Activated T-helper 1 cell treated with anti-CD3 and anti-CD28 coated beads, Interleukin-12 subunit alpha, Interleukin-12 subunit beta, Interleukin-2, Interleukin-4 antibody, amounts not matched to agents 30 ng/mL and 10 ng/mL and 1 ng/mL, durations not matched to agents 14 hours and 24 hours and 36 hours (primary cell): ENCODE measurements at regions of chr10 and their contacts with region 1.

Region 1: DNA sequence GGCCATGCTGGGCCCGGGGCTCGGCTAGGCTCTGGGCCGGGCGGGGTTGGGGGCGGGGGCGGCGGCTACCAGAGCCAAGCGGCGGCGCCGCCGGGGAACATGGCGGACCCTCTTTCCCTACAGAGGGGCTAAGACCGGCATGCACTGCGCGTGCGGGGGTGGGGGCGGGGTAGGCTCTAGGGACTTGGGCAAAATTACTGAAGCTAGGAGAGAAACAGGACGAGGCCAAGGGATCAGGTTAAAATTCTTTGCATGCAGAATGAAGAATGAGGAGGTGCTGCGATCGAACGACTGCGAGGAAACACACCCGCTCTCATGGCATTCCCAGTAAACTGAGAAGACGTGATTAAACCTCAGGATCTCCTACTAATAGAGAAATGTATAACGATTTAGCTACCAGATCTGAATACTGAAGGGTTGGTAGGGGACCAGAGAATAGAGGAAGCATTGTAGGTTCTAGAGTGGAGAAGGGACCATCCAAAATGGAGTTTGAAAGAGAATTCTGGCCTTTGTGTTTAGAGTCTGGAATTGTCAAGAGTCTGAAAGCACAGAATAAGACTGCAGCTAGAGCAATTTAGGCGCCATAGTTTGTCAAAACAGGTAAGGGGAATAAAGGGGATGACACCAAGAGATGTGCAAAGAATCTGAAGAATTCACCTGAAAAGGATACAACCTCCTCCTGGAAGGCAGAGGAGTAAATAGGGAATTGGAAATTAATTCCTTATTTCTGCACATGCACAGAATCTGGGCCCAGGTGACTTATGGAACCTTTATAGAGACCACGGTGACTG is at the start of gene PPP3CB:
- DNase-seq: peak; percentile 77
- H3K4me3 Mint-ChIP-seq: peak within 1 kb of the TSS; percentile 100
- H3K27ac Mint-ChIP-seq: peak within 1 kb of the TSS; percentile 98
- H3K4me1 Mint-ChIP-seq: peaks cover 43% of the 10 kb centered on the region
- H3K27me3 Mint-ChIP-seq: no peaks in the 10 kb centered on the region
- total RNA-seq, gene PPP3CB: 43.6 and 43.9 TPM in 2 replicates

Region 2: GRCh38 chr10:72260588-72261322 is 1235.3 kb before region 1 on chr10:
- intact Hi-C with region 1: loop called (anchors 5 kb)
- DNase-seq: peak; percentile 81
- H3K4me3 Mint-ChIP-seq: peak overlapping the region; percentile 86
- H3K27ac Mint-ChIP-seq: peak overlapping the region; percentile 98
- H3K4me1 Mint-ChIP-seq: peaks cover 67% of the 10 kb centered on the region
- H3K27me3 Mint-ChIP-seq: no peaks in the 10 kb centered on the region

Region 3: DNA sequence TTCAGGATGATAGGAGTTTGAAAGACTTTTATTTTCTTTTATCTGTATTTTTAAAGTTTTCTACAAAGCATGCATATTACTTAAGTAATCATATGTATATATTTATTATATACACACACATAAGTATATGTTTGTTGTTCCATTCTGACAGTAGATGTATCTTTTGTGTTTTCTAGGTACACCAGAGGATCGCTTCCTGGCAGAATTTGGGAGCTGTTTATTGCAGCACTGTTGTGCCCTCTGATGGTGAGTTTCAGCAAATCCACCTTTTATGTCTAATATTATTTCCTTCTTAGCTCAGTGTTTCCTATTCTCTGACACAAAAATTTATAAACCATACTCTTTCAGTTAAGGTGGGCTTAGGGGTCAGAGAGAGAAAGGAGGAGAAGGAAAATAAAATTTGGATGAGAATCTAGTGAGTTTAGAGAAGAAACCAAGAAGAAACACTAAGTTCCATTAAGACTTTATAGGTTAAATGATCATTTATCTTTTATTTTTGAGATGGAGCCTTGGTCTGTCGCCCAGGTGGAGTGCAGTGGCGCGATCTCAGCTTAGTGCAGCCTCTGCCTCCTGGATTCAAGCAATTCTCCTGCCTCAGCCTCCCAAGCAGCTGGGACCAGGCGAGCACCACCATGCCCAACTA is 661.8 kb before region 1 on chr10:
- intact Hi-C with region 1: no loop called
- DNase-seq: peak; percentile 14
- H3K4me3 Mint-ChIP-seq: no peak overlapping the region
- H3K27ac Mint-ChIP-seq: no peak overlapping the region
- H3K4me1 Mint-ChIP-seq: no peaks in the 10 kb centered on the region
- H3K27me3 Mint-ChIP-seq: no peaks in the 10 kb centered on the region

Region 4: GRCh38 chr10:73167783-73168464 is 328.2 kb before region 1 on chr10 and contains the starts of genes ECD and FAM149B1:
- intact Hi-C with region 1: loop called (anchors 5 kb)
- DNase-seq: peak; percentile 91
- H3K4me3 Mint-ChIP-seq: peak within 1 kb of the TSS; percentile 99
- H3K27ac Mint-ChIP-seq: peak within 1 kb of the TSS; percentile 99
- H3K4me1 Mint-ChIP-seq: peaks cover 42% of the 10 kb centered on the region
- H3K27me3 Mint-ChIP-seq: no peaks in the 10 kb centered on the region
- total RNA-seq, gene ECD: 38.0 and 39.5 TPM in 2 replicates
- total RNA-seq, gene FAM149B1: 11.1 and 11.3 TPM in 2 replicates

Region 5: GRCh38 chr10:73358331-73359279 is 137.5 kb before region 1 on chr10 and contains the start of gene CFAP70:
- intact Hi-C with region 1: loop called (anchors 1 kb)
- DNase-seq: peak; percentile 90
- H3K4me3 Mint-ChIP-seq: peak within 1 kb of the TSS; percentile 93
- H3K27ac Mint-ChIP-seq: peak within 1 kb of the TSS; percentile 86
- H3K4me1 Mint-ChIP-seq: peaks cover 20% of the 10 kb centered on the region
- H3K27me3 Mint-ChIP-seq: peaks cover 8% of the 10 kb centered on the region
- total RNA-seq, gene CFAP70: 0.26 and 0.34 TPM in 2 replicates

Region 6: GRCh38 chr10:73625884-73626752 is 130.0 kb after region 1 on chr10:
- intact Hi-C with region 1: loop called (anchors 1 kb)
- DNase-seq: peak; percentile 90
- H3K4me3 Mint-ChIP-seq: peak overlapping the region; percentile 94
- H3K27ac Mint-ChIP-seq: peak overlapping the region; percentile 95
- H3K4me1 Mint-ChIP-seq: peaks cover 17% of the 10 kb centered on the region
- H3K27me3 Mint-ChIP-seq: no peaks in the 10 kb centered on the region

Region 7: DNA sequence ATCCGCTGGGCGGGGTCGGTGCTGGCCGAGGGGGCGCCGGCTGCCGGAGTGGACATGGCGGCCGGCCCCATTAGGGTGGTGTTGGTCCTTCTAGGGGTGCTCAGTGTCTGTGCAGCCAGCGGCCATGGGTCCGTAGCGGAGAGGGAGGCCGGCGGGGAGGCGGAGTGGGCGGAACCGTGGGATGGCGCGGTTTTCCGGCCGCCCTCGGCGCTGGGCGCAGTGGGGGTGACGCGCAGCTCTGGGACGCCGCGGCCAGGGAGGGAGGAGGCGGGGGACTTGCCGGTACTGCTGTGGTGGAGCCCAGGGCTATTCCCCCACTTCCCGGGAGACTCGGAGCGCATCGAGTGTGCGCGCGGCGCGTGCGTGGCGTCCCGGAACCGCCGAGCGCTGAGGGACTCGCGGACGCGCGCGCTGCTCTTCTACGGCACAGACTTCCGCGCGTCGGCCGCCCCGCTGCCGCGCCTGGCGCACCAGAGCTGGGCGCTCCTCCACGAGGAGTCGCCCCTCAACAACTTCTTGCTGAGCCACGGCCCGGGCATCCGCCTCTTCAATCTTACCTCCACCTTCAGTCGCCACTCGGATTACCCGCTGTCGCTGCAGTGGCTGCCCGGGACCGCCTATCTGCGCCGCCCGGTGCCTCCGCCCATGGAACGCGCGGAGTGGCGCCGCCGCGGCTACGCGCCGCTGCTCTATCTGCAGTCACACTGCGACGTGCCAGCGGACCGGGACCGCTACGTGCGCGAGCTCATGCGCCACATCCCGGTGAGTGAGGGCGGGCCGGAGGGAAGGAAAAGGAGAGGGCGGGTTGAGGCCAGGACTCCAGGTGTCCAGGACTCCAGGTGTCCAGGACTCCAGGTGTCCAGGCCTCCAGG is 276.4 kb after region 1 on chr10:
- intact Hi-C with region 1: loop called (anchors 1 kb)
- DNase-seq: peak; percentile 85
- H3K4me3 Mint-ChIP-seq: peak overlapping the region; percentile 94
- H3K27ac Mint-ChIP-seq: peak overlapping the region; percentile 91
- H3K4me1 Mint-ChIP-seq: peaks cover 67% of the 10 kb centered on the region
- H3K27me3 Mint-ChIP-seq: no peaks in the 10 kb centered on the region

Region 8: DNA sequence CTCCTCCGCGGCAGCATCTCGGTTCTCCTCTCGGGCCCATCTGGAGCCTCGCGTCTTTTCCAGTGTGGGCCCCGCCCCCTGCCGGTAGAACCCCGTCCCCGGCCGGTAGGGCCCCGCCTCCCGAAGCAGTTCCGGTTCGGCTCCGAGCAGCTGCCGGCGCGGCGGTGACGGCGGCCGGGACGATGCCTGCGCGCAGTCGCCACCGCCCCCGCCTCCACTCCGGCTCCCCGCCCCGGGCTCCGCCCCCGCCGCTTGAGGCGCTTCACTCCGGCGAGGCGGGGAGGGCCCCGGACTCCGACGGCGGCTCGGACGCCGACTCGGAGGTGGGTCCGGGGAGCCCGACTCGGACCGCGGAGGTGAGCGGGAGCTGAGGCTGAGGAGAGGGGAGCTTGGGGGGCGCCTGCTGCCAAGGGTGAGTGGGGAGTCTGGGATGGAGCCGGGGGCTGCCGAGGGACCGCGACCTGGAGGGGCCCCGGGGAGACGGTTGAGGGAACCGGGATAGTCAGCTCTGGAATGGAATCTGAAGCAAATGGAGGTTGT is 1615.4 kb after region 1 on chr10 and contains the start of gene SAMD8:
- intact Hi-C with region 1: loop called (anchors 5 kb)
- DNase-seq: peak; percentile 97
- H3K4me3 Mint-ChIP-seq: peak within 1 kb of the TSS; percentile 95
- H3K27ac Mint-ChIP-seq: peak within 1 kb of the TSS; percentile 99
- H3K4me1 Mint-ChIP-seq: peaks cover 50% of the 10 kb centered on the region
- H3K27me3 Mint-ChIP-seq: no peaks in the 10 kb centered on the region
- total RNA-seq, gene SAMD8: 16.2 and 16.5 TPM in 2 replicates